ENCODE measurements at regions of chr20 and their contacts with region 1.

Region 1: DNA sequence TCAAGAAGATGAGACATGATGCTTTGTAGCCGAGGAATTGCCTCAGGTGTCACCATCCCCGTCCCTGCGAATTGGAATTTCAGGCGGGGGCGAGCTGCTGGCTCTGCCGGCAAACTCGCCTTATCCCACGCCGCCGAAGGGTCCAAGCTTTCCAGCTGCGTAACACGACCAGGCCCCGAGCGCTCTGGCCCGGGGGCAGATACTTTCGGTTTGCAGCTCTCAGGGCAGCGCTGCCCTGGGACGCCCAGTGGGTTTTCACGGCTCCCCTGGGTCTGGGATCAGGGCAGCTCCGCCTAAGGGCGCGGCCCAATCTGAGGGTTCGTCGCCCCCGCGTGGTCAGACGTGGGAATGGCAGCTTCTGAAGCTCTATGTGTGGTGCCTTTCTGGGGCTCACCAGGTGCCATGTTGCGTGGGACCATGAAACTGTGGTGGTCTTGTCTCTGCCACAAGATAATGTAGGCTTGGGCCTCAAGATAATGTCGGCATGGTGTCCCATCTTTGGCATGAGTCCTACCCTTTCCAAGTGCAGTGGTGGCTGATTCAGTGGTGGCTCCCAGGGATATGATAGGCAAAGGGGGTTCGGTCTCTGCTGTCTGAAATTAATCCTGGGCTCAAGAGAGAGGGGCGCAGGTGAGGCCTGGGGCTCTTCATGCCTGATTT is 20.9 kb downstream of the PIGT start:
- DNase-seq: peak; percentile 92
- ATAC-seq: peak; percentile 99
- H3K4me3 Mint-ChIP-seq: peak overlapping the region; percentile 73
- H3K27ac Mint-ChIP-seq: no peak overlapping the region
- H3K4me1 Mint-ChIP-seq: peaks cover 17% of the 10 kb centered on the region
- H3K27me3 Mint-ChIP-seq: no peaks in the 10 kb centered on the region
- CTCF ChIP-seq: peak; percentile 97

Region 2: GRCh38 chr20:45311589-45312211 is 125.2 kb before region 1 on chr20:
- CTCF ChIA-PET with region 1: interaction called, 15 read pairs
- POLR2A ChIA-PET with region 1: no interaction called
- intact Hi-C with region 1: no loop called
- DNase-seq: peak; percentile 74
- ATAC-seq: peak; percentile 80
- H3K4me3 Mint-ChIP-seq: no peak overlapping the region
- H3K27ac Mint-ChIP-seq: no peak overlapping the region
- H3K4me1 Mint-ChIP-seq: peaks cover 5% of the 10 kb centered on the region
- H3K27me3 Mint-ChIP-seq: peaks cover 57% of the 10 kb centered on the region
- CTCF ChIP-seq: peak; percentile 93

Region 3: DNA sequence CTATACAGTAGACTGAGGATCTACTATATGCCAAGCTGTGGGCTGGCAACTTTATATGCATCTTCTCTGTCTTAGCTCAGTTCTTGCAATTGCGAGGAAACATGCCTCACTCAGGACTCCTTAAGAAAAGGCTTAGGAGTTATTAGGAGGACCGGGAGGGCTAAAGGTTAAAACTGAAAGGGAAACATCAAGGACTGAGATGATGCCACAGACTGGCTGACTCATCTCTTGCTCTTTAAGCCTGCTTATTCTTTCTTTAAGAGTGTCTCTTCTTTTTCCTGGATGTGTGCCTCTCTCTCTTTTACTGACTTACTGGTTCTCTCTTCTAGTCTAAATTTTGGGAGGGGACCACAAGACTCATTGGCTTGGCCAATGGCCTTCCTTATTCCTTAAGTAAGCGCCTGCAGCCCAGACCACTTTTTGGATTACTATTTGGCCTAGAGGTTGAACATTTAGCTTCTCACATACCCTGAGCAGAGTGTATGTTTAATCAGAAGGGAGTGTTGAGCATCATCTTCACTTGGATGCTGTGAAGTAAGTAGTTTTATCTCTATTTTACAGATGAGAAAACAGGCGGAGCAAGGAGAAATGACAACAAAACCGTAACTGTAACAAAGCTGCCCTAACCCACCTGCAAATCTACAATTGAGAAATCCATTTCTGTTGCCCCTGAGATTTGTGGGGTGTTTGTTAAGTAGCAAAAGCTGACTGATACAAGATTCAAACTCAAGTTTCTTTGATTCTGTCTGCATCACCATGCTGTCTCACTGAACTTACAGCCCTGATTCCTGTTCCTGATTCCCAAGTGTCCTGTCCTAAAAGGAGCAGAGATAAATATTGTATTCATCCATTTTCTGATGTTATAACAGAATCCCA is 81.4 kb before region 1 on chr20:
- CTCF ChIA-PET with region 1: interaction called, 549 read pairs
- POLR2A ChIA-PET with region 1: no interaction called
- intact Hi-C with region 1: no loop called
- DNase-seq: peak; percentile 53
- ATAC-seq: peak; percentile 76
- H3K4me3 Mint-ChIP-seq: peak overlapping the region; percentile 64
- H3K27ac Mint-ChIP-seq: peak overlapping the region; percentile 92
- H3K4me1 Mint-ChIP-seq: peaks cover 51% of the 10 kb centered on the region
- H3K27me3 Mint-ChIP-seq: no peaks in the 10 kb centered on the region
- CTCF ChIP-seq: no peak

Region 4: GRCh38 chr20:45387274-45387673 is 49.6 kb before region 1 on chr20:
- CTCF ChIA-PET with region 1: interaction called, 14 read pairs
- POLR2A ChIA-PET with region 1: no interaction called
- intact Hi-C with region 1: no loop called
- DNase-seq: no peak
- ATAC-seq: no peak
- H3K4me3 Mint-ChIP-seq: no peak overlapping the region
- H3K27ac Mint-ChIP-seq: no peak overlapping the region
- H3K4me1 Mint-ChIP-seq: peaks cover 23% of the 10 kb centered on the region
- H3K27me3 Mint-ChIP-seq: no peaks in the 10 kb centered on the region
- CTCF ChIP-seq: no peak

Region 5: DNA sequence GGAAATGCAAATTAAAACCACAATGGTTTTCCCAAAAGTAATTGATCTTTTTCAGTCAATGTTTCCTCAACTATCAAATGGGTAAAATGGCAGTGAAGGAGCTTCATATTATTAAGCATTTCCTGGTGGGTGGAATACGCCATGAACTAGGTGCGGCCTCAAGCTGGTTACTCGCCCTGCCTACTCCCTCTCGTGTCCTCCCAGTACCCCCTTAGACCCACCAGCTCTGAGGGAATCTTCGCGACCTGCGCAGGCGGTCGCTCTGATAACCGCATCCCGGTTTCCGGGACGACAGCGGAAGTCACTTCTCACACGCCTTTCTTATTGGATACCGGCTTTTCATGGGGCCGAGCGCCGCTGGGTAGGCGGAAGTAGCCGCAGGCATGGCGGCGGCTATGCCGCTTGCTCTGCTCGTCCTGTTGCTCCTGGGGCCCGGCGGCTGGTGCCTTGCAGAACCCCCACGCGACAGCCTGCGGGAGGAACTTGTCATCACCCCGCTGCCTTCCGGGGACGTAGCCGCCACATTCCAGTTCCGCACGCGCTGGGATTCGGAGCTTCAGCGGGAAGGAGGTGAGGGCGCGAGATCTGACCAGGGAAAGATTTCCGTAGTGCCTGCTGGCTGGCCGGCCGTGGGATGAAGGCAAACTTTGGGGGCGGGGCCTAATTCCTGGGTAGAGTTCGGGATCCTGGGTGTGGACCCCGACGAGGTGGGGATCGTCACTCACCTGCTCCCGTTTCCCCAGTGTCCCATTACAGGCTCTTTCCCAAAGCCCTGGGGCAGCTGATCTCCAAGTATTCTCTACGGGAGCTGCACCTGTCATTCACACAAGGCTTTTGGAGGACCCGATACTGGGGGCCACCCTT is 20.9 kb before region 1 on chr20 and contains the start of gene PIGT:
- CTCF ChIA-PET with region 1: interaction called, 12 read pairs
- POLR2A ChIA-PET with region 1: interaction called, 4 read pairs
- intact Hi-C with region 1: no loop called
- DNase-seq: peak; percentile 94
- ATAC-seq: peak; percentile 90
- H3K4me3 Mint-ChIP-seq: peak within 1 kb of the TSS; percentile 87
- H3K27ac Mint-ChIP-seq: peak within 1 kb of the TSS; percentile 95
- H3K4me1 Mint-ChIP-seq: peaks cover 33% of the 10 kb centered on the region
- H3K27me3 Mint-ChIP-seq: no peaks in the 10 kb centered on the region
- CTCF ChIP-seq: no peak
- total RNA-seq, gene PIGT: 43.7 to 47.7 TPM

Measured in activated CD8-positive, alpha-beta T cell treated with anti-CD3 and anti-CD28 coated beads for 36 hours (primary cell).